ENCODE measurements at regions of chr15 and their contacts with region 1.

Region 1: GRCh38 chr15:90101969-90102890 is at the start of gene IDH2:
- DNase-seq: peak; percentile 82
- H3K4me3 ChIP-seq: peak within 1 kb of the TSS; percentile 96 to 99
- H3K27ac ChIP-seq: peak within 1 kb of the TSS; percentile 92 to 99
- H3K4me1 ChIP-seq: peaks cover 27% of the 10 kb centered on the region
- H3K27me3 ChIP-seq: no peaks in the 10 kb centered on the region
- CTCF ChIP-seq: peak in 2 of 4 experiments; percentile 14 to 36
- POLR2A ChIP-seq: peak; percentile 96
- total RNA-seq, gene IDH2: 98.1 to 190 TPM

Region 2: DNA sequence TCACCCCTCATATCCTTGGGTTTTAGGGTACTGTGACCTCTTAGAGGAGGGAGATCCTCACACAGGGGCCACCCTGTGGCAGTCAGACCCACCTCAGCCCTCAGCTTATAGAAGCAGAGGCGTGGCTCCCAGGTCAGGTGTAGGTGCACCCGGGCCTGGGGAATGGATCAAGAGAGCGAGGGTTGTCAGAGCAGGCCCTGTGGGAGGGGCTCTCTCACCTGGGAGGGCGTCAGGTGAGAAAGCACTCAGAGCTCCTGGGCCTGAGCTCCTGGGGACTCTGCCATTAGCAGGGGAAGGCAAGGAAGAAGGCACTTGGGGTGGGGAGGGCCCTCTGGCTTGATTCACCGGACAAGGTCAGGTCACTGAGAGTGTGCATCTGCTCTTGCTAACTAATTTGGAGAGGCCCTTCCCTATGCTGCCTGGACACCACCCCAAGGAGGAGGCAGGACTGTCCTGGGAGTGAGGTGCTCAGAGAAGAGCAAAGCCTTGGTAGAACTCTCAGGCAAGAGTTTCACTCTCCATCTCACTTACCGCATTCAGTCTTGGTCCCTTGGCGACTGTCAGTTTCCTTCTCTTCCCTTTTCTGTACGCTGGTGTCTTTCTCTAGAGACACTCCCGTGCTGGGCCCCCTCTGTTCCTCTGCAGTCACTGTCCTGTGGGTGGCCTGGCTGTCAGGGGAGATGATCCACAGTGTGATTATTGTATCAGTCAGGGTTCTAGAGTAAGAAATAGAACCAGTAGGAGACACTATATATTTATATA is 44.1 kb before region 1 on chr15:
- intact Hi-C with region 1: no loop called
- DNase-seq: no peak
- H3K4me3 ChIP-seq: no peak overlapping the region
- H3K27ac ChIP-seq: no peak overlapping the region
- H3K4me1 ChIP-seq: peaks cover 18% of the 10 kb centered on the region
- H3K27me3 ChIP-seq: no peaks in the 10 kb centered on the region
- CTCF ChIP-seq: no peak
- POLR2A ChIP-seq: no peak

Region 3: GRCh38 chr15:90154861-90155626 is 52.8 kb after region 1 on chr15:
- intact Hi-C with region 1: loop called (anchors 5 kb)
- DNase-seq: peak; percentile 83
- H3K4me3 ChIP-seq: no peak overlapping the region
- H3K27ac ChIP-seq: peak overlapping the region; percentile 43 to 84
- H3K4me1 ChIP-seq: peaks cover 31% of the 10 kb centered on the region
- H3K27me3 ChIP-seq: no peaks in the 10 kb centered on the region
- CTCF ChIP-seq: peak in 3 of 4 experiments; percentile 7 to 43 (median 26)
- POLR2A ChIP-seq: peak; percentile 7

Measured in prostate gland (tissue), 2 donors.